Posterior vena cava (tissue), 2 donors: ENCODE measurements at regions of chr4 and their contacts with region 1.

Region 1: GRCh38 chr4:26346203-26346620 is 25.4 kb downstream of the RBPJ start:
- DNase-seq: no peak

Region 2: DNA sequence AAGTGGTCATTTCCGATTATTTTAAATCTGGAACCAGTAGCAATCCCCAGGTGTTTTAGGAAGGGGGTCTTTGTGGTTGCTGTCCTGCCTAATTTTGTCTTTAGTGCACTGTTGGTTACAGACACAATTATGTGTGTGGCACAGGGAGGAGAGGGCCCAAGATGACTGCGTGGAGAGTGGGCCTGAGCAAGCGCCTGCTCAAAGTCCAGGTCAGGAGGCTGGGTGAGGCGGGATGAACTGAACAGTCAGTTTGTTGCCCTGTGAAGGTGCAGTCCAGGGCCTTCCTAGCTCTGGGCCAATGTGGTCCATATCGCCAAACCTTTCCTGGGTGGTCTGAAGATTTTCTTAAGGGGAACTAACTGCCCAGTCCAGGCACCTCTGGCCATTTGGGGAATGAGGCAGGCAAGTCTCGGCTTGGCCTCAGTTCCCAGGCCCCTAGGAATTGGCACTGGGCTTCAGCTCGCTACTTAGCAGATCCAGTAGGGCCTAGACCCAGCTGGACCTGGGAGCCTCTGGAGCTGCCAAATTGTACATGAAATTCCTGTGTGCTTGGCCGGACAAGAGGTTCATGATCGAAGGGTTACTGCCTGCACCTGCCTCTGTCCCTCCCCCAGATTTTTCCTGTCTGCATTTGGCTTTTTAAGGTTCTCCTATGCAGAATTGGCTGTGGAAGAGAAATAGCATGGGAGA is 921.5 kb before region 1 on chr4:
- intact Hi-C with region 1: loop called in 1 of 2 experiments (anchors 5 kb)
- DNase-seq: no peak